B cell (primary cell): ENCODE measurements at regions of chr5 and their contacts with region 1.

Region 1: GRCh38 chr5:140946578-140946977 is 19.7 kb upstream of the PCDHAC2 start:
- DNase-seq: no peak
- ATAC-seq: no peak
- H3K4me3 ChIP-seq: no peak overlapping the region
- H3K4me3 Mint-ChIP-seq: no peak overlapping the region
- H3K27ac ChIP-seq: no peak overlapping the region
- H3K27ac Mint-ChIP-seq: no peak overlapping the region
- H3K4me1 ChIP-seq: no peaks in the 10 kb centered on the region
- H3K4me1 Mint-ChIP-seq: no peaks in the 10 kb centered on the region
- H3K27me3 ChIP-seq: no peaks in the 10 kb centered on the region
- H3K27me3 Mint-ChIP-seq: no peaks in the 10 kb centered on the region
- CTCF ChIP-seq: no peak

Region 2: DNA sequence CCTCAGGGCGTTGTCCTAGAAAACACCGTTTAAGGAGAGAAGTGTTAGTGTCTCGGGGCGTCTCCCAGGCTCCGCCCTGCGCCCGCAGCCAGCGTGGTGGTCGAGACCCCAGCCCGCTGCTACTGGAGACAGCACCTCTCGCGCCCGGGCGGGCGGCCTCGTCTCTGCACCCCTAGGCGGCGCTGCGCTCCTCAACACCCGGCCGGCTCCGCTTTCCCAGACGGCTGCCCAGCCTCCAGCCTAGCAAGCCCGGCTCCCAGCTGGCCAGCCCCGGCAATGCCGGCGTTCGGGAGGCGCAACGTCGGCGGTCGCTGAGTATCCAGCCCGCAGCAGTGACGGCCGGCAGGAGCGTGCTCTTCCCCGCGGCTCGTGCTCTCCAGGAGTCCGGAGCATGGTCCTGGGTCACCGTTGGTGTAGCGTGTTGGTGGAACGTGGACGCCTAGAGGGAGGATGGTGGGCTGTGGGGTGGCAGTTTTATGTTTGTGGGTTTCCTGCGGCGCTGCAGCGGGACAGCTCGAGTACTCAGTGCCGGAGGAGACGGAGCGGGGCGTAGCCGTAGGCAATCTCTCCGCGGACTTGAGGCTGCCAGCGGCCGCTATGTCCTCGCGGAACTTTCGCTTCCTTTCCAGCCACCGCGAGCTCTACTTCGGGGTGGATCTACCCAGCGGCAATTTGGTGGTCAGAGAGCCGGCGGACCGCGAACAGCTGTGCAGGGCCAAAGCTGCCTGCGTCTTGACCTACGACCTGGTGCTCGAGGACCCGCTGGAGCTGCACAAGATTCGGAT is 19.9 kb before region 1 on chr5:
- CTCF ChIA-PET with region 1: no interaction called
- POLR2A ChIA-PET with region 1: no interaction called
- intact Hi-C with region 1: loop called (anchors 1 kb)
- DNase-seq: peak; percentile 9
- ATAC-seq: no peak
- H3K4me3 ChIP-seq: peak overlapping the region in 2 of 5 experiments; percentile 12 to 19
- H3K4me3 Mint-ChIP-seq: peak overlapping the region; percentile 61
- H3K27ac ChIP-seq: no peak overlapping the region
- H3K27ac Mint-ChIP-seq: no peak overlapping the region
- H3K4me1 ChIP-seq: peaks cover 4 to 14% of the 10 kb centered on the region in 2 donors
- H3K4me1 Mint-ChIP-seq: peaks cover 5% of the 10 kb centered on the region
- H3K27me3 ChIP-seq: peaks cover 0 to 26% (median 9%) of the 10 kb centered on the region in 4 experiments
- H3K27me3 Mint-ChIP-seq: peaks cover 44% of the 10 kb centered on the region
- CTCF ChIP-seq: peak; percentile 15